OCI-LY7 (cell line): ENCODE measurements at regions of chr4 and their contacts with region 1.

Region 1: DNA sequence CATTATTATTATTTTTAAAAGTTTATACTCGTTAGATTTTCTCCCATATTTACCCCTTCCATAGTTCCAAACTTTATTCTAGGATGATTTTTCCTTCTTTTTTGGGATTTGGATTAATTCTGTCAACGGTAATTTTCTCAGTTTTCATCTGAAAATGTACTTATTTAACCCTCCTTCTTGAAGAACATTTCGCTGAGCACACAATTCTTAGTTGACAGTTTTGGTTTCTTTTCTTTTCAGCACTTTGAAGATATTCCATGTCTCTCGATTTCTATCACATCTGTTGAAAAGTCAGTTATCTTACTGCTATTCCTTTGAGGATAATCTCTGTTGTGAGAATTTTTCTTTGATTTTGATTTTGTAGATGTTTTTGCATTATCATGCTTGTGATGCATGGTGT is 85.2 kb downstream of the SCLT1 start:
- DNase-seq: no peak
- H3K4me3 ChIP-seq: no peak overlapping the region
- H3K27ac ChIP-seq: no peak overlapping the region
- H3K4me1 ChIP-seq: no peaks in the 10 kb centered on the region
- CTCF ChIP-seq: no peak

Region 2: GRCh38 chr4:128879283-128879682 is 128.8 kb before region 1 on chr4:
- CTCF ChIA-PET with region 1: no interaction called
- POLR2A ChIA-PET with region 1: no interaction called
- intact Hi-C with region 1: no loop called
- DNase-seq: no peak
- H3K4me3 ChIP-seq: no peak overlapping the region
- H3K27ac ChIP-seq: no peak overlapping the region
- H3K4me1 ChIP-seq: no peaks in the 10 kb centered on the region
- CTCF ChIP-seq: no peak

Region 3: GRCh38 chr4:128942607-128943006 is 65.5 kb before region 1 on chr4:
- CTCF ChIA-PET with region 1: no interaction called
- POLR2A ChIA-PET with region 1: interaction called, 10 read pairs
- intact Hi-C with region 1: no loop called
- DNase-seq: no peak
- H3K4me3 ChIP-seq: no peak overlapping the region
- H3K27ac ChIP-seq: no peak overlapping the region
- H3K4me1 ChIP-seq: no peaks in the 10 kb centered on the region
- CTCF ChIP-seq: no peak